ENCODE measurements at regions of chr1 and their contacts with region 1.

Region 1: GRCh38 chr1:145963995-145964901 is at the starts of genes ANKRD34A and POLR3GL:
- DNase-seq: peak; percentile 95 to 97
- H3K4me3 ChIP-seq: peak within 1 kb of the TSS; percentile 52
- H3K4me3 Mint-ChIP-seq: peak within 1 kb of the TSS; percentile 87
- H3K27ac Mint-ChIP-seq: peak within 1 kb of the TSS; percentile 59
- H3K4me1 ChIP-seq: peaks cover 16% of the 10 kb centered on the region
- H3K4me1 Mint-ChIP-seq: peaks cover 20% of the 10 kb centered on the region
- H3K27me3 ChIP-seq: no peaks in the 10 kb centered on the region; the same call in 1 of the 2 replicates
- H3K27me3 Mint-ChIP-seq: peaks cover 7% of the 10 kb centered on the region
- CTCF ChIP-seq: no peak
- total RNA-seq, gene ANKRD34A: 0.19 and 0.77 TPM in 2 replicates
- total RNA-seq, gene POLR3GL: 2.9 and 3.4 TPM in 2 replicates

Region 2: DNA sequence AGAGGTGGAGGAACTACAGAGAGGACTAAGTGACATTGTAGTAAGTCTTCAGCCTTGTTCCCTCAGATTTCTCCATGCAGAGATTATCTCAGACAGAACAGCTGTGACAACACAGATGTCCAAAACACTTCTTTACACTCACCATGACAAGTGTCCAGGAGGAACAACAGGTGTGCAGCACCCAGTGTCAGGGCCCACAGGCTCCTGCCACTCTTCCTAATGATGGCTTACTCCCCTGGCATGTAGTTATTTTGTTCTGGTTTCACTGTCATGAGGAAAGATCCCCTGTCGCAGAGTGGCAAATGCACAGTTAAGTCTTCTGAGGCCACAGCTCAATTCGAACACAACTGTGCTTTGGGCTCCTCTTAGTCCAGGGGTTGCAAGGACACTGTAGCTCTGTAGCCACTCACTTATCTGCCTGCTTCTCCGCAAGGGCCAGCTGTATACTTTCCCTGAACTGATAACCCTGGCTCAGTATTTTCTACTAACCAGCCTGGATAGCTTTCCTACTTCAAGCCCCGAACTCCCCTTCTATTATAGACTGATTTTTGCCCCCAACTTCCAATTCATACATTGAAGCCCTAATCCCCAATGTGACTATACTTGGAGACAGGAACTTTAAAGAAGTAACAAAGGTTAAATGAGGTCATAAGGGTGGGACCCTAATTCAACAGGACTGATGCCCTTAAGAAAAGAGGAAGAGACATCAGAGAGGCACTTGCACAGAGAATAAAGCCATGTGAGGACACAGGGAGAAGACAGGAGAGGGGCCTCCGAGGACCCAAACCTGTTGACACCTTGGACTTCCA is 268.2 kb before region 1 on chr1:
- CTCF ChIA-PET with region 1: no interaction called
- POLR2A ChIA-PET with region 1: no interaction called
- intact Hi-C with region 1: no loop called
- DNase-seq: no peak
- H3K4me3 ChIP-seq: no peak overlapping the region
- H3K4me3 Mint-ChIP-seq: no peak overlapping the region
- H3K27ac Mint-ChIP-seq: no peak overlapping the region
- H3K4me1 ChIP-seq: peaks cover under 1% of the 10 kb centered on the region; the same call in 1 of the 2 replicates
- H3K4me1 Mint-ChIP-seq: peaks cover 20% of the 10 kb centered on the region
- H3K27me3 ChIP-seq: no peaks in the 10 kb centered on the region
- H3K27me3 Mint-ChIP-seq: no peaks in the 10 kb centered on the region
- CTCF ChIP-seq: no peak

Region 3: DNA sequence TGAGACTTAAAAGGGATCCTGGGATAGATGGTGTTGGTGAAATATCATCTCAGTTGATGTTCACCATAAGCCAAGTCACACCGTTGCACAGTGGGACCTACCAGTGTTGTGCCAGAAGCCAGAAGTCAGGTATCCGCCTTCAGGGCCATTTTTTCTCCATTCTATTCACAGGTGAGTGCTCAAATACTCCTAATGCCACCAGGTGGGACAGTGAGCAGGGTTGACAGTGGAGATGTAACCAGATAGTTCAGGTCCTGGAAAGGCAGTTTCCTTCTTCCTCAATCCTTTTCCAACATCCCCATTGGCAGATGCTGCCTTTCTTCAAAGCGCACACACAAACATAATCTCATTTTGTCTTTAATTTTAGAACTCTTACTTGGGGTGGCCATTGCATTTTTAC is 233.3 kb before region 1 on chr1:
- CTCF ChIA-PET with region 1: no interaction called
- POLR2A ChIA-PET with region 1: no interaction called
- intact Hi-C with region 1: no loop called
- DNase-seq: peak in 1 of 2 experiments; percentile 42
- H3K4me3 ChIP-seq: no peak overlapping the region
- H3K4me3 Mint-ChIP-seq: no peak overlapping the region
- H3K27ac Mint-ChIP-seq: no peak overlapping the region
- H3K4me1 ChIP-seq: no peaks in the 10 kb centered on the region
- H3K4me1 Mint-ChIP-seq: peaks cover 7% of the 10 kb centered on the region
- H3K27me3 ChIP-seq: no peaks in the 10 kb centered on the region
- H3K27me3 Mint-ChIP-seq: no peaks in the 10 kb centered on the region
- CTCF ChIP-seq: peak; percentile 32 to 45

Region 4: DNA sequence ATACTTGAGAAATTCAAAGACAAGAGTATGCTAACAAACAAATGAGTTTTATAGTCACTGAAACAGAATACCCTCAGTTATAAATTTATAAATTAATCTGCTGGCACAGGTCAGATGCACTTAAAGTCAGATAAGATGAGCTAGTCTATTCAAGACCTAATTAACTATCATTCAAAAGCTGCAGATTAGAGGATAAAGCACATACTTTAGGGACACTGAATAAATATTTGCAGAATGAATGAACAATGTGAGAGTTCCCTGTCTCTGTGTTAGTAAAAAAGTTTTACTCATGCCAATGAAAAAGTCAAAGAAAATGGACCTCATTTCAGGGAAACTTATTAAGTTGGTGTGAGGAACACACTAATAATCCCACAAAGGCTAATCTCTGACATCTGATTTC is 198.7 kb before region 1 on chr1:
- CTCF ChIA-PET with region 1: no interaction called
- POLR2A ChIA-PET with region 1: no interaction called
- intact Hi-C with region 1: no loop called
- DNase-seq: peak in 1 of 2 experiments; percentile 24
- H3K4me3 ChIP-seq: no peak overlapping the region
- H3K4me3 Mint-ChIP-seq: peak overlapping the region; percentile 16
- H3K27ac Mint-ChIP-seq: peak overlapping the region; percentile 86
- H3K4me1 ChIP-seq: peaks cover 42% of the 10 kb centered on the region
- H3K4me1 Mint-ChIP-seq: peaks cover 6% of the 10 kb centered on the region
- H3K27me3 ChIP-seq: no peaks in the 10 kb centered on the region
- H3K27me3 Mint-ChIP-seq: no peaks in the 10 kb centered on the region
- CTCF ChIP-seq: no peak

Region 5: GRCh38 chr1:145918144-145918992 is 45.9 kb before region 1 on chr1 and contains the start of gene PEX11B:
- CTCF ChIA-PET with region 1: interaction called, 3 read pairs
- POLR2A ChIA-PET with region 1: interaction called, 5 read pairs
- intact Hi-C with region 1: loop called (anchors 1 kb)
- DNase-seq: peak; percentile 83 to 88
- H3K4me3 ChIP-seq: peak within 1 kb of the TSS; percentile 76
- H3K4me3 Mint-ChIP-seq: peak within 1 kb of the TSS; percentile 94
- H3K27ac Mint-ChIP-seq: peak within 1 kb of the TSS; percentile 79
- H3K4me1 ChIP-seq: no peaks in the 10 kb centered on the region
- H3K4me1 Mint-ChIP-seq: peaks cover 7% of the 10 kb centered on the region
- H3K27me3 ChIP-seq: no peaks in the 10 kb centered on the region
- H3K27me3 Mint-ChIP-seq: no peaks in the 10 kb centered on the region
- CTCF ChIP-seq: no peak
- total RNA-seq, gene PEX11B: 14.5 and 16.1 TPM in 2 replicates

Region 6: DNA sequence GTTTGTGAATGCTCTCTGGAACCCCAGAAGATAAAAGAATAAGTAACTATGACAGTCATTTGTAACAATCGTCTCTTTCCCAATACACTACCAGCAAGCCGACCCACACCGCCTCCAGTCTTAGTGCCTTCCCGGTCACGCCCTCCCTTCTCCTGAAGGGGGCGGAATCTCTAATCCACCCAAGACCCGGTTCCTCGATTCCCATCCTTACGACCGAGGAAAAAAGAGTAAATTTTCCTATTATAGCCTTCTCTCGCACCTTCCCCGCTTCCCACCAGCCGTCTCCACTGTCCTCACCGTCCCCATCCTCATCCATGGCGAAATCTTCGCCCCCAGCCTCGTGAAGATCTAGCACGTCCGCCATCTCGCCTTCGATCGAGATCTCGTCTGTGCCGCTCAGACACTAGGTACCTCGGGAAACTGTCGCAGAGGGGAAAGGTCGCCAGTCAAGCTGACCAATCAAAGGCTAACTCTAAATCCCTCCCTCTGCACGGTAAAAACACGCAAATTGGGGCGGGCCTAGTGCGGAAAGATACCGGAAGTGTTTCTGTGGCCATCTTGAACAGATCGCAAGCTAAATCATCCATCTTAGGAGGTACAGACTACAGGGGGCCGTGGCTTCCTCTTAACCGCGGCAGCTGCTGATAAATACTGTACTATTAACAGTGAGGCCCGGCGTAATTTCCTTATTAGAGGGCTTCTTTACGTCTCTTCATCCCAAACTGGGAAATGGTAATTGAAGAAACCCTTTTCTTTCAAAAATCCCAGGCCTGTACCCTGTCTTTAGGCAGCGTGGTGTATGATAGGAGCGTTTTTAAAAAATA is 37.0 kb before region 1 on chr1 and contains the start of gene RBM8A:
- CTCF ChIA-PET with region 1: interaction called, 14 read pairs
- POLR2A ChIA-PET with region 1: interaction called, 25 read pairs
- intact Hi-C with region 1: loop called (anchors 1 kb)
- DNase-seq: peak; percentile 95 to 97
- H3K4me3 ChIP-seq: peak within 1 kb of the TSS; percentile 84
- H3K4me3 Mint-ChIP-seq: no peak within 1 kb of the TSS
- H3K27ac Mint-ChIP-seq: no peak within 1 kb of the TSS
- H3K4me1 ChIP-seq: peaks cover 3% of the 10 kb centered on the region
- H3K4me1 Mint-ChIP-seq: peaks cover 6% of the 10 kb centered on the region
- H3K27me3 ChIP-seq: no peaks in the 10 kb centered on the region
- H3K27me3 Mint-ChIP-seq: no peaks in the 10 kb centered on the region
- CTCF ChIP-seq: peak; percentile 73 to 74
- total RNA-seq, gene RBM8A: 178 and 185 TPM in 2 replicates

Region 7: GRCh38 chr1:145947551-145947950 is 16.7 kb before region 1 on chr1:
- CTCF ChIA-PET with region 1: no interaction called
- POLR2A ChIA-PET with region 1: no interaction called
- intact Hi-C with region 1: no loop called
- DNase-seq: no peak
- H3K4me3 ChIP-seq: no peak overlapping the region
- H3K4me3 Mint-ChIP-seq: no peak overlapping the region
- H3K27ac Mint-ChIP-seq: no peak overlapping the region
- H3K4me1 ChIP-seq: no peaks in the 10 kb centered on the region
- H3K4me1 Mint-ChIP-seq: no peaks in the 10 kb centered on the region
- H3K27me3 ChIP-seq: no peaks in the 10 kb centered on the region
- H3K27me3 Mint-ChIP-seq: no peaks in the 10 kb centered on the region
- CTCF ChIP-seq: no peak

Region 8: DNA sequence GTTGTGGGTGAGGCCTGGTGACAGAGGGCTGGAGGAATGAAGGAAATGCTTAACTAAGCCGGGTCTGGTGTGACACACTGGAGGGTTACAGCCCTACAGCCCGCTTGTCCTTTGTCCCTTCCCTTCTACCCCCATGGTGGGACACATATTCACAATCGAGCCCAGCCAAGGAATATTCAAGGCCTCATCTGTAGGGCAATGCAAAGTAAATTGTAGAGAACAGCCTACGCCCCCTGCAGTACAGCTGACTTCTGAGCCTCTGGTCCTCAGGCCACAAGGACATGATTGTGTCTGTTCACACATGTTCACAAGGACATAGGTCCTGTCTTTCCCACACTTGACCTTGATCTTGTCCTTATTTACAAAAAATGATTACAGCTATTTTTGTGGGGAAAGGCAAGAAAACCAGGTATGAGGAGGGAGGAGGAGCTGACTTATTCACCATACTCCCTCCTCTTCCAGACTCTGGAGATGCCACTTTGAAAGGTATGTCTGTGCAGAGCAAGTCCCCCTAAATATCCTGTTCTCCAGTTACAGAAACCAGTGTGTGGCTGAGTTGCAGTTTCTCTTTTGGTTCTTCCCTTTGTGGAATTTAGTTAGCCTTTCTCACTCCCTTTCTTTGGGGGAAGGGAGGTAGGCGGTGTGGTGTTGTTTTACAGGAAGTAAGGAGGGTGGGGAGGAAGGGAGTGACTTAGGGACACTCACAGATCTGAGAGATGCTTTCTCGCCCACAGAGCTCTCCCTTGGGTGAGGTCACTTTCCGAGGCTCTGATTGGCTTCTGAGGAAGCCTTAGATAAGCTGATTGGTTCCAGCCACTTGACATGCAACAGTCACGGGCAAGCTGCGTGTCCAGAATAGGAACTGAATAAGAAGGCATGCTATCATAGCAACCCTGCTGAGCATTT is 14.9 kb after region 1 on chr1:
- CTCF ChIA-PET with region 1: interaction called, 18 read pairs
- POLR2A ChIA-PET with region 1: interaction called, 7 read pairs
- intact Hi-C with region 1: no loop called
- DNase-seq: peak; percentile 82 to 92
- H3K4me3 ChIP-seq: no peak overlapping the region
- H3K4me3 Mint-ChIP-seq: no peak overlapping the region
- H3K27ac Mint-ChIP-seq: no peak overlapping the region
- H3K4me1 ChIP-seq: peaks cover 32% of the 10 kb centered on the region
- H3K4me1 Mint-ChIP-seq: no peaks in the 10 kb centered on the region
- H3K27me3 ChIP-seq: no peaks in the 10 kb centered on the region
- H3K27me3 Mint-ChIP-seq: no peaks in the 10 kb centered on the region
- CTCF ChIP-seq: peak in 1 of 2 experiments; percentile 37

Region 9: GRCh38 chr1:145996433-145997015 is 32.3 kb after region 1 on chr1 and contains the start of gene TXNIP:
- CTCF ChIA-PET with region 1: no interaction called
- POLR2A ChIA-PET with region 1: no interaction called
- intact Hi-C with region 1: loop called (anchors 1 kb)
- DNase-seq: peak; percentile 95 to 98
- H3K4me3 ChIP-seq: peak within 1 kb of the TSS; percentile 91
- H3K4me3 Mint-ChIP-seq: peak within 1 kb of the TSS; percentile 84
- H3K27ac Mint-ChIP-seq: peak within 1 kb of the TSS; percentile 93
- H3K4me1 ChIP-seq: peaks cover 13% of the 10 kb centered on the region; the same call in 1 of the 2 replicates
- H3K4me1 Mint-ChIP-seq: peaks cover 15% of the 10 kb centered on the region
- H3K27me3 ChIP-seq: no peaks in the 10 kb centered on the region
- H3K27me3 Mint-ChIP-seq: no peaks in the 10 kb centered on the region
- CTCF ChIP-seq: no peak
- total RNA-seq, gene TXNIP: 27.5 and 38.6 TPM in 2 replicates

Region 10: DNA sequence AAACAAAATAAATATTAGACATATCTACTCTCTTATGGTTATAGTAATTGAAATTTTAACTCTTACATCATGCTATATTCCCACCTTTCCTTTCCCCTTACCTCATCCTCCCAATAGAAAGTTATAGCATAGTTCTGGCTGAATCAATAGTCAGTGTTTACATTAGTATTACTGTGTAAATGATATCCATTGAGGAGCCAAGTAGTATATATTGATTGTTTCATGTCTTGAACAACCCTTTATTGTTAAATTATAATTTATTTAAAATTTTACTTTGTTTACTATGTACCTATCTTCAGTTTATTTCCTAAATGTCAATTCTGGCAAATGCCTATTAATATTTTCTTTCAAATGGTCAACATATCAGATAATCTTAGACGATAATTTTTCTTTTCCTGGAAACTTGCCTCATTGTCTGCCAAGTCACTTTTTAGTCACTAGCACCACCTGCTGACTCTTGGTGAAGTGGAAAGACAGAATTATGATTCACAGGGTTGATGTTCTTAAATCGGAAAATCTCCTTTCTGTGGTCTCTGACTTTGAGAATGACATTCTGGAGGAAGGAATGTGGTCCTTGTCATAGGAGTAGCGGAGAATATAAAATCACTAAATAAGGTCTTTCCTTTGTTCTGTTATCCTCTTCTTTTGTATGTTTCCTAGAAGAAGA is 48.6 kb after region 1 on chr1:
- CTCF ChIA-PET with region 1: interaction called, 3 read pairs
- POLR2A ChIA-PET with region 1: no interaction called
- intact Hi-C with region 1: loop called (anchors 5 kb)
- DNase-seq: peak in 1 of 2 experiments; percentile 65
- H3K4me3 ChIP-seq: no peak overlapping the region
- H3K4me3 Mint-ChIP-seq: no peak overlapping the region
- H3K27ac Mint-ChIP-seq: no peak overlapping the region
- H3K4me1 ChIP-seq: no peaks in the 10 kb centered on the region
- H3K4me1 Mint-ChIP-seq: peaks cover 8% of the 10 kb centered on the region
- H3K27me3 ChIP-seq: no peaks in the 10 kb centered on the region
- H3K27me3 Mint-ChIP-seq: peaks cover 7% of the 10 kb centered on the region
- CTCF ChIP-seq: peak; percentile 50 to 81

Region 11: DNA sequence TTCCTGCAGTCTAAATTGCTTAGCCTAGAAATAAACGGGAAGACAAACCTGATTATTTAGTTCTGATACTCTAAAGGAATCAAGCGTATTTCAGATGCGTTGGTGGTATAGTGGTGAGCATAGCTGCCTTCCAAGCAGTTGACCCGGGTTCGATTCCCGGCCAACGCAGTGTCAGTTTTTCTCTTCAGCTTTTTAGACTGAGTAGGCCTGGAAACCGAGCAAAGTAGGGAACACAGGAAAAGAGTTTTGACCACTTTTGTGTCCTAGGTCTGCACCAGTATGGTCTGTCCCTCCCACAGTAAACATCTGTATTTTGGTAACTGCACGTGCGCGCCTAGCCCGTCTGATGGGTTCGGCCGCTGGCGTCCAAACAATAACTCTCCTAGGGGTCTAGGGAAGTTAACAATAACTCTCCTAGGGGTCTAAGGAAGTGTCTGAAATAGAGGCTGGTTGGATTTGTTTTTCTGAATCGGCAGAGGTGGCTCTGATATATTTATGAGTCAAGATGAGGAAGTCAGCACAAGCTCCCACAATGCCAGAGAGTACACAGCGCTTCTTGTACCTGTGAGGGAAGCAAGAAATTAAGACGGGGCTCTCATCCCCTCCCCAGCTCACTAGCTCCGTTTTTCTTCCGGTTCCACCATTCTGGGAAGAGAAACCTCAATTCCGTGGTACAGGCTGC is 72.9 kb after region 1 on chr1:
- CTCF ChIA-PET with region 1: interaction called, 3 read pairs
- POLR2A ChIA-PET with region 1: interaction called, 5 read pairs
- intact Hi-C with region 1: loop called (anchors 5 kb)
- DNase-seq: peak; percentile 84 to 90
- H3K4me3 ChIP-seq: peak overlapping the region; percentile 82
- H3K4me3 Mint-ChIP-seq: peak overlapping the region; percentile 92
- H3K27ac Mint-ChIP-seq: peak overlapping the region; percentile 100
- H3K4me1 ChIP-seq: 0 out of 2 replicates have a peak, but pooled peaks cover 3% of the 10 kb centered on the region
- H3K4me1 Mint-ChIP-seq: peaks cover 13% of the 10 kb centered on the region
- H3K27me3 ChIP-seq: no peaks in the 10 kb centered on the region
- H3K27me3 Mint-ChIP-seq: peaks cover 8% of the 10 kb centered on the region
- CTCF ChIP-seq: no peak